Activated CD4-positive, alpha-beta memory T cell treated with anti-CD3 and anti-CD28 coated beads for 36 hours (primary cell): ENCODE measurements at regions of chr19 and their contacts with region 1.

Region 1: DNA sequence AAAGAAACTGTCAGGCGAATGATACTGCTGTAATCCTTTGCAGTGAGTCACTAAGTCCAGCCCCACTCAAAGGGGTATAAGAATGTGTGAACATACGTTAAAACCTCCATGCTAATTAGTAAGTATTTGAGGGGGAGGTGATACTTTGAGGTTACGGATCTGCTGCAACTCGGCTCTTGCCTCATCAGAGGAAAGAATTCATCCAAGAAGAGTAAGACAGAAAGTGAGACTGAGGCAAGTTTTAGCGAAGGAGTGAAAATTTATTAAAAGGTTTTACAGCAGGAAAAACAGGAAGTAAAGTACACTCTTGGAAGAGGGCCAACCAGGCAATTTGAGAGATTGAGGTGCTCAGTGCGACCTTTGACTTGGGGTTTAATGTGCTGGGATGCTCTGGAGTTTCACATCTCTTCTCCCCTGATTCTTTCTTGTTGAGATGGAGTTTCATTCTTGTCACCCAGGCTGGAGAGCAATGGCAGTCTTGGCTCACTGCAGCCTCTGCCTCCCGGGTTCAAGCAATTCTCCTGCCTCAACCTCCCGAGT is 9.8 kb downstream of the CLEC4M start:
- DNase-seq: peak; percentile 63
- H3K4me3 Mint-ChIP-seq: peak overlapping the region; percentile 41
- H3K27ac Mint-ChIP-seq: peak overlapping the region; percentile 61
- H3K4me1 Mint-ChIP-seq: peaks cover 18% of the 10 kb centered on the region
- H3K27me3 Mint-ChIP-seq: peaks cover 34% of the 10 kb centered on the region

Region 2: DNA sequence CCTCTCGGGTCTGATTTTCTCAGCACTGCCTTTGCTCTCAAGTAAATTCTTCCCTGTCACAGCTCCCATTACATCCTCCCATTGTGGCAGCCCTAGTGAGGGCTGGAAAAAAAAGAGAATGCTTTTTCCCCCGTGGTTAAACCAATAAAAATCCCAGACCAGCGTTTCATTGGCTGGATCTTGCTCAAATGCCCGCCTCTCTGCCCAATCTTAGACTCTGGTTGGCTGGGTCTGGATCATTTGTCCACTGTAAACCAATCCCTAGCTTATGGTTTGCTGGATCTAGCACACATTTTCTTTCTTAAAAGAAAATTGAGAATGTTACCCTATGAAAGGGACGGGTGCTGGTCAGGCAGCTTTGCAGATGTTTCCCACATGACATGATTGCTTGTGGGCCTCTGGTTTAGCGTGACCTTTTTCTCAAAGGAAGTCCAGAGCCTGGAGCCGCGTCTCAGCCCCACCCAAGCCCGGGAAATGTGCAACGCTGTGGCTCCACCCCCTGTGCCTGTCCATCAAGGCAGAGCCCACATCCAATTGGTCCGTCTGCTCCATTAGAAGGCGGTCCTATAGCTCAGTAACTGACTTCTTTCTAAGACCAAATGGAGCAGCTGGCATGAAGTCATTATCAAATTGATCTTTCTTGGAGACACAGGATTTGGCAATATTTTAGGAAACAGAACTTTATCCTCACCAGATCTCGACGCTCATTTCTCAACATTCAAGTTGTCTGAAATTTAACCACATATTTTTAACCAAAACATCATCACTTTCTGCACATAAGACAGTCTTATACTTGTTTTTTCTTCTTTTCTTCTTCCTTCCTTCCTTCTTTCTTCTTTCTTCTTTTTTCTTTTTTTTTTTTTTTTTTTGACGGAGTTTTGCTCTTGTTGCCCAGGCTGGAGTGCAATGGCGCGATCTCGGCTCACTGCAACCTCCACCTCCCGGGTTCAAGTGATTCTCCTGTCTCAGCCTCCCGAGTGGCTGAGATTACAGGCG is 98.5 kb before region 1 on chr19:
- CTCF ChIA-PET with region 1: no interaction called
- POLR2A ChIA-PET with region 1: no interaction called
- intact Hi-C with region 1: no loop called
- DNase-seq: peak; percentile 46
- H3K4me3 Mint-ChIP-seq: no peak overlapping the region
- H3K27ac Mint-ChIP-seq: no peak overlapping the region
- H3K4me1 Mint-ChIP-seq: peaks cover 41% of the 10 kb centered on the region
- H3K27me3 Mint-ChIP-seq: peaks cover 46% of the 10 kb centered on the region

Region 3: DNA sequence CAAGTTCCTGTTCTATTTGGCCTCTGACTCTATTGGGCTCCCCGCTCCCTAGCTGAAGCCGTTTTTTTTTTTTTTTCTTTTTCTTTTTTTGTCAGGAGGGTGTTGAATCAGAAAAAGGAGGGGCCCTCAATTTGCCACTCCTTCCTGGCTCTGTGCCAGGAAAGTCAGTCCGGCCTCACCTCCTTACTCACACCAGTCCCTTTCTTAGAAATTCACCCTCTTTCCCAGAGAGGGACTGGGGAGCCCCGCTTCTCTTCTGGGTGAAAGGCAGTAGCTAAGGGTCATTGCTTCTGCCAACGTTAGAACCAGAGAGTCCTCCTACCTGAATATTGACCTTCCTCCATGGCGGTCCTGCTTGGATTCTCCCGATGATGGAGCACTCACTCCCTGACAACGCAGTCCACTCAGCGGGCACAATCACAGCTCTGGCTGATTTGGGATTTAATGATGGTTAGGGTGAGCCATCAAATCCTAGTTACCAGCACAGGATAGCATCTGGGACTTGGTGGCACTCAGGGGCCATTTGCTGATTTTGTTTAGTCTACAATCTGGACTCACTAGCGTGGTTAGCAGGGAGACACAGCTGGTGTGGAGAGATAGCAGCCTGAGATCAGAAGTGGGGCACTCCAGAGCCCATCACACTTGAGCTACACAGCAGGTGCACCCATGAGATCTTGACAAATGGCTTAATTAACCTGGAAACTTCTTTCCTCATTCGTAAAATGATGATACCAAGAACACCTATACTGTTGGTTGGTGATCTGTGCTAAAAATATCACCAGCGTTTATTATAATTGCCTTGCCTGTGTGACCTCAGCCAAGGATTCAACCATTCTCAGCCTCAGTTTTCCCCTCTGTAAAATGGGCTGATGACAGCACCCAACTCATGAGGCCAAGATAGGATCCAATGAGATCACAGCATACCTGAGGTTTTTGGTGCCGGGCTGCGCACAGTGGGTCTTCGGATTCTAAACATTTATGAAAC is 73.1 kb before region 1 on chr19:
- CTCF ChIA-PET with region 1: no interaction called
- POLR2A ChIA-PET with region 1: no interaction called
- intact Hi-C with region 1: loop called (anchors 2 kb)
- DNase-seq: peak; percentile 81
- H3K4me3 Mint-ChIP-seq: peak overlapping the region; percentile 6
- H3K27ac Mint-ChIP-seq: peak overlapping the region; percentile 39
- H3K4me1 Mint-ChIP-seq: peaks cover 16% of the 10 kb centered on the region
- H3K27me3 Mint-ChIP-seq: peaks cover 21% of the 10 kb centered on the region

Region 4: DNA sequence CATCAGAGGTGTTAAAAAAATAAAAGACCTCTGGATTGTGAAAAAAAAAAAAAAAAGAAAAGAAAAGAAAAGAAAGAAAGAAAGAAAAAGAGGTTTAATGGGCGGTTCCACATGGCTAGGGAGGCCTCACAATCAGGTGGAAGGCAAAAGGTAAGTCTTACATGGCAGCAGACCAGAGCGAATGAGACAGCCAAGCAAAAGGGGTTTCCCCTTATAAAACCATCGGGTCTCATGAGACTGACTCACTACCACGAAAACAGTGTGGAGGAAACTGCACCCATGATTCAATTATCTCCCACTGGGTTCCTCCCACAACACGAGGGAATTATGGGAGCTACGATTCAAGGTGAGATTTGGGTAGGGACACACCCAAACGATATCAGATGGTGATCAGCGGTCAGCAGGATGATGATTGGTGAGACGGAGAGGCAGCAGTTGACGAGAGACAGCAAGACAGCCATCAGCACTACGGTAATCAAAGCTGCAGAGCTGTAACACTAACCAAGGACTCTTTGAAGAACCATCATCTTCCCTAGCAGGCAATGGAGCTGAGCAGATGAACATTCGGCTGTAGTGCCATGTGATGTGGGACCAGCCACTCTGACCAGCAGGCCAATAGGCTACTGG is 21.6 kb before region 1 on chr19:
- CTCF ChIA-PET with region 1: interaction called, 4 read pairs
- POLR2A ChIA-PET with region 1: no interaction called
- intact Hi-C with region 1: loop called (anchors 1 kb)
- DNase-seq: peak; percentile 67
- H3K4me3 Mint-ChIP-seq: no peak overlapping the region
- H3K27ac Mint-ChIP-seq: peak overlapping the region; percentile 35
- H3K4me1 Mint-ChIP-seq: peaks cover 28% of the 10 kb centered on the region
- H3K27me3 Mint-ChIP-seq: peaks cover 22% of the 10 kb centered on the region

Region 5: GRCh38 chr19:7819337-7819736 is 46.5 kb after region 1 on chr19:
- CTCF ChIA-PET with region 1: no interaction called
- POLR2A ChIA-PET with region 1: no interaction called
- intact Hi-C with region 1: no loop called
- DNase-seq: no peak
- H3K4me3 Mint-ChIP-seq: no peak overlapping the region
- H3K27ac Mint-ChIP-seq: no peak overlapping the region
- H3K4me1 Mint-ChIP-seq: peaks cover 14% of the 10 kb centered on the region
- H3K27me3 Mint-ChIP-seq: peaks cover 38% of the 10 kb centered on the region